ENCODE measurements at regions of chr11 and their contacts with region 1.

Region 1: GRCh38 chr11:122215244-122215992 is 99.4 kb upstream of the BLID start:
- DNase-seq: peak; percentile 84
- H3K4me3 ChIP-seq: no peak overlapping the region
- H3K27ac ChIP-seq: no peak overlapping the region
- H3K4me1 ChIP-seq: peaks cover 10% of the 10 kb centered on the region
- H3K27me3 ChIP-seq: no peaks in the 10 kb centered on the region
- CTCF ChIP-seq: peak; percentile 99

Region 2: GRCh38 chr11:122248131-122248530 is 32.7 kb after region 1 on chr11:
- CTCF ChIA-PET with region 1: no interaction called
- POLR2A ChIA-PET with region 1: no interaction called
- intact Hi-C with region 1: no loop called
- DNase-seq: no peak
- H3K4me3 ChIP-seq: no peak overlapping the region
- H3K27ac ChIP-seq: no peak overlapping the region
- H3K4me1 ChIP-seq: peaks cover 47% of the 10 kb centered on the region
- H3K27me3 ChIP-seq: no peaks in the 10 kb centered on the region
- CTCF ChIP-seq: no peak

Region 3: GRCh38 chr11:122293296-122294023 is 78.0 kb after region 1 on chr11:
- CTCF ChIA-PET with region 1: interaction called, 3 read pairs
- POLR2A ChIA-PET with region 1: no interaction called
- intact Hi-C with region 1: loop called (anchors 5 kb)
- DNase-seq: peak; percentile 37
- H3K4me3 ChIP-seq: no peak overlapping the region
- H3K27ac ChIP-seq: no peak overlapping the region
- H3K4me1 ChIP-seq: no peaks in the 10 kb centered on the region
- H3K27me3 ChIP-seq: no peaks in the 10 kb centered on the region
- CTCF ChIP-seq: peak; percentile 64

Region 4: DNA sequence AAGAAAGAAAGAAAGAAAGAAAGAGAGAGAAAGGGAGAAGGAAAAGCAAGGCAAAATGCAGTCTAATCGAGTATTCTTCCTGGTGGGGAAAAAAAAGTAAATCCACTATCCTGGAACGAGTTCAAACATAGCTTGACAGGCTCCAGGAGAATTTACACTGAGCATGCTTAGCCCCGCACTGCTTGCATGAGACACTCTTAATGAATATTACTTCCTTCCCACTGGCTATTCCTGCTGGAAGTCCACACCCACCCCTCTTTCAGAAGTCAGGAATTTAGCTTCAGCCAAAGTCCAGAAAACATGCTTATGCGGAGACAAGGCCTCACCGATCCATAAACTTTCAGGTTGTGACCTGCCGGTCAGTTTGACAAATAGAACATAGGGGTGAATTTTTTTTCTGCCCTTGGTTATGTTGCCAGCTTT is 152.4 kb after region 1 on chr11:
- CTCF ChIA-PET with region 1: interaction called, 4 read pairs
- POLR2A ChIA-PET with region 1: no interaction called
- intact Hi-C with region 1: loop called (anchors 10 kb)
- DNase-seq: peak; percentile 52
- H3K4me3 ChIP-seq: no peak overlapping the region
- H3K27ac ChIP-seq: no peak overlapping the region
- H3K4me1 ChIP-seq: peaks cover 14% of the 10 kb centered on the region
- H3K27me3 ChIP-seq: no peaks in the 10 kb centered on the region
- CTCF ChIP-seq: no peak